ENCODE measurements at regions of chr15 and their contacts with region 1.

Region 1: GRCh38 chr15:31488426-31489204 is 162.0 kb downstream of the KLF13 start:
- DNase-seq: peak; percentile 93
- H3K27ac ChIP-seq: peak overlapping the region; percentile 90
- CTCF ChIP-seq: peak; percentile 93

Region 2: GRCh38 chr15:31215490-31216214 is 273.0 kb before region 1 on chr15:
- CTCF ChIA-PET with region 1: interaction called, 13 read pairs
- POLR2A ChIA-PET with region 1: no interaction called
- DNase-seq: peak; percentile 76
- H3K27ac ChIP-seq: peak overlapping the region; percentile 100
- CTCF ChIP-seq: peak; percentile 88